ENCODE measurements at regions of chr4 and their contacts with region 1.

Region 1: DNA sequence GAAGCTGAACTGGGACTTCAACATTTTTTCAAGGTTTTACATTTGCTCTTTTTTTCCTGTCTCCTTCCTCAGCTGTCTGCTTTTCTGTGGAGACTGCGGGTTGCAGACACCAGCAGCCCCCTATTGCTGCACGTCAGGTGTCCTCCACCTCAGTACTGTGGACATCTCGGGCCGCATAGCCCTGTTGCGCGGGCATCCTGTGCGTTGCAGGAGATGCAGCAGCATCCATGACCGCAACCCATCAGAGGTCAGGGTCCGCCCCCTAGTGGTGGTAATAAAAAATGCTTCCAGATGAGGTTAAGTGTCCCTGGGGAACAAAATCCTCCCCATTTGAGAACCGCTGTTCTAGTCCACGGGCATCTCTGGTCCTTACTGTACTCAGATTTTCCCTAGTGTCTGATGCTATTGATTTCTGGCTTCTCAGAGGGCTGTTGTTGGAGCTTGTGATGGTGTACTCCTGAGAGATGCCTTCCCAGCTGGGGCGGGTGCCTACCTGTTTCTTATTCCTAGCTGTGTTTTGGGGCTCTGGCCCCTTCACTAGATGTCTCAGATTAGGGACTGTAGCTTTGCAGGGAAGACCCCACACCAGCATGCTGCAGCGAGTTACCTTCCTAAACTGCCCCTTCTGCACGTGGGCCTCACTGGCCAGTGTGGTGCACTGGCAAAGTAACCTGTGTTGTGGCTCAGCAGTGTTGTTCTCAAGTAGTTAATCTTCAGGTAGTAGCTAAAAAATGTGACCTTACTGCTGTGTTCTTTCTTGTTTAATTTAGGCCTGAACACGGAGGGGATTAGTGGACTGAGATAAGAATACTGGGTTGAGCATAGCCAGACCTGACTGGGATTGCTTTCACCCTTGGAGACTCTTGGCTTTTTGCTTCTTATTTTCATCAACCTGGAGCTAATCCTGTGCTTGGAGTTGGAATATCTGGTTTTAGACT is 28.2 kb downstream of the NSD2 start:
- DNase-seq: peak; percentile 40 to 71
- H3K4me3 ChIP-seq: no peak overlapping the region
- H3K27ac ChIP-seq: no peak overlapping the region
- H3K4me1 ChIP-seq: no peaks in the 10 kb centered on the region
- H3K27me3 ChIP-seq: no peaks in the 10 kb centered on the region
- CTCF ChIP-seq: peak; percentile 87 to 91 (median 89)
- POLR2A ChIP-seq: no peak

Region 2: DNA sequence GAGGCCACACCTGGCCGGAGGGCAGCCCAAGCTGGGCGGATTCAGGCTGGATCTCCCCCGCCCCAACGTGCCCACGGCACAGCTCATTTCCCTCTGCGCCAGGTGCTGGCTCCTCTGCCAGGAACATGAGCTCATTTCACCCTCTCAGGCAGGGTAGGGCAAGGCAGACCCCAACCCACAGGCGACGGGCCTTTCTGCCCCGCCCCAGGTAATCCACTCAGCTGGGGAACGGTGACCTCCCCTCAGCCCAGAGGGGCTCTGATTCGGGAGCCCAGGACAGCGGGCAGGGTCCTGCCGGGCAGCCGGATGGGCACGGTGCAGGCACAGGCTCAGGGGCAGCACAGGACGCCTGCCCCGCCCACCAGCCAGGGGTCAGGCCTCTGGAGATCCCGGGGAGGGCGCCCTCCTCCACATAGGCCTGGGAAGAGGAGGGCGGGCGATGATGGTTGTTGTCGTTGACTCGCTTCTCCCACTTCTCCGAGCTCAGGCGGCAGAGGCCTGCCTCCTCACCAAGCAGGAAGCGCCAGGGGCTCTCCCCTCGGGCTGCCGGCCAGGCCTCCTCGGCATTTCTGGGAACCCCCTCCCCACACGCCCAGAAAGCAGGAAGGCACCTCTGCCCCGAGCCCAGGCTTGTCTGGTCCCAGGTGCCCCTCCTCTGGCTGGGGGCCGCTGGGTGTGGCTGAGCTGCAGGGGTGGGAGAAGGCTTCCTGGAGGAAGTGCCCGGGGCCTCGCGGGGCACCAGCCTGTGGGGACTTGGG is 147.0 kb before region 1 on chr4:
- intact Hi-C with region 1: loop called (anchors 10 kb)
- DNase-seq: peak in 1 of 2 donors; percentile 29
- H3K4me3 ChIP-seq: peak overlapping the region in 1 of 3 donors; percentile 22
- H3K27ac ChIP-seq: peak overlapping the region; percentile 38 to 50
- H3K4me1 ChIP-seq: no peaks in the 10 kb centered on the region
- H3K27me3 ChIP-seq: no peaks in the 10 kb centered on the region
- CTCF ChIP-seq: no peak
- POLR2A ChIP-seq: no peak

Region 3: DNA sequence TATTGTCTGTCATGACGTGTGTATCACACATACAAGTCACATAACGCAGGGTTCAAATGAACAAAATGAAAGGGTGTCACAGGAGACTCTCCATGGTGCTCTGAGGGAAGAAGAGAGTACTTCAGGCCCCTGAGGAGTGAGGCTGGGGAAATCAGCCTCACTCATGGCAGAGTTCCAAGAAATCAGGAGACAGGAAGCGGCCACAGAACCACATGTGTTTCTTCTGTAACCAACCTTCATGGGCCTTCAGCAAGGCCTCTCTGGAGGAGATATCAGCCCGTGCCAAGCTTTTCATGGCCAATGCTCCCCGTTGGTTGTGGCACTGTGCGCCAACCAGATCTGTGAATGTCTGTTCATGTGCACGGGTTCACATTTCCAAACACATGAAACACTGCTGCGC is 235.7 kb after region 1 on chr4:
- intact Hi-C with region 1: no loop called
- DNase-seq: no peak
- H3K4me3 ChIP-seq: no peak overlapping the region
- H3K27ac ChIP-seq: no peak overlapping the region
- H3K4me1 ChIP-seq: no peaks in the 10 kb centered on the region
- H3K27me3 ChIP-seq: no peaks in the 10 kb centered on the region
- CTCF ChIP-seq: no peak
- POLR2A ChIP-seq: no peak